MCF 10A (cell line): ENCODE measurements at regions of chr10 and their contacts with region 1.

Region 1: DNA sequence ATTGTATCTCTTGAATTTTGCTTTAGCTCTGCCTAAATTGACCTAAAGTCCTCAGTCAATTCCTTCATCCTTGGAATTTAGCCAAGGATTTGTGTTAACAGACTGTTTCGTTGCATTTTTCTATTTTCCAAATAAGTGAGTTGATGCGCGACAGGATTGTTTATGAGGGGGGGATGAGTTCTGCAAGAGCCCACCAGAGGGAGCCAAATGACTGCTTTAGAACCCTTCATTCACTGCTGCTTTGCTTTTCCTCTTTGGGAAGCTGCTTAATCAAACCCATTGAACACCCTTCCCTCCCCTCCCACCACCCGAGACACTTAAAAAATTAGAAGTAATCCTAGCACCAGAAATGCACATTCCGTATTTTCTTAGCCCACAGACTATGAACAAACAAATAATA is 33.7 kb upstream of the PTF1A start:
- DNase-seq: peak; percentile 71
- H3K4me3 Mint-ChIP-seq: no peak overlapping the region
- H3K27ac Mint-ChIP-seq: no peak overlapping the region
- H3K4me1 Mint-ChIP-seq: peaks cover 17% of the 10 kb centered on the region
- H3K27me3 Mint-ChIP-seq: peaks cover 55% of the 10 kb centered on the region
- CTCF ChIP-seq: peak; percentile 73

Region 2: DNA sequence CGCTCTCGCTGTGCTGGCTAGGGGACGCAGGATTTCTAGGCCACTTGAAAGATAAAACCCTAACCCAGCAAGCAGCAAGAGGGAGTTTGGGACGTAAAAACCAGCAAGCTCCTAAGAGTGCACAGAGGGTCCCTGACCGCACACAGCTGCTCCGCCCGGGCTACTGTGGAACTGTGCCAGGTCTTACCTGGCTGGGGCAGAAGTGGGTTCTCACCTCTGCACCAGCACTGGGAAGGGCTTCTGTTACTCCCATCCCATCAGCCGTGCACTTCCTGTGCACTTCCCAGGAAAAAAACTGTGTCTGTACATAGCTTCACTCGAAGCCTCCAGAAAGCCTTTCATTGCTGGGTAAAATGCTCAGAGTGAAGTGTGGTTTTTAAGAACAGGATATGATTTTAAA is 12.1 kb before region 1 on chr10:
- CTCF ChIA-PET with region 1: interaction called, 15 read pairs
- POLR2A ChIA-PET with region 1: no interaction called
- intact Hi-C with region 1: no loop called
- DNase-seq: no peak
- H3K4me3 Mint-ChIP-seq: no peak overlapping the region
- H3K27ac Mint-ChIP-seq: no peak overlapping the region
- H3K4me1 Mint-ChIP-seq: no peaks in the 10 kb centered on the region
- H3K27me3 Mint-ChIP-seq: no peaks in the 10 kb centered on the region
- CTCF ChIP-seq: no peak

Region 3: GRCh38 chr10:23258516-23258915 is 100.1 kb after region 1 on chr10:
- CTCF ChIA-PET with region 1: no interaction called
- POLR2A ChIA-PET with region 1: no interaction called
- intact Hi-C with region 1: no loop called
- DNase-seq: no peak
- H3K4me3 Mint-ChIP-seq: no peak overlapping the region
- H3K27ac Mint-ChIP-seq: no peak overlapping the region
- H3K4me1 Mint-ChIP-seq: no peaks in the 10 kb centered on the region
- H3K27me3 Mint-ChIP-seq: peaks cover 65% of the 10 kb centered on the region
- CTCF ChIP-seq: no peak

Region 4: DNA sequence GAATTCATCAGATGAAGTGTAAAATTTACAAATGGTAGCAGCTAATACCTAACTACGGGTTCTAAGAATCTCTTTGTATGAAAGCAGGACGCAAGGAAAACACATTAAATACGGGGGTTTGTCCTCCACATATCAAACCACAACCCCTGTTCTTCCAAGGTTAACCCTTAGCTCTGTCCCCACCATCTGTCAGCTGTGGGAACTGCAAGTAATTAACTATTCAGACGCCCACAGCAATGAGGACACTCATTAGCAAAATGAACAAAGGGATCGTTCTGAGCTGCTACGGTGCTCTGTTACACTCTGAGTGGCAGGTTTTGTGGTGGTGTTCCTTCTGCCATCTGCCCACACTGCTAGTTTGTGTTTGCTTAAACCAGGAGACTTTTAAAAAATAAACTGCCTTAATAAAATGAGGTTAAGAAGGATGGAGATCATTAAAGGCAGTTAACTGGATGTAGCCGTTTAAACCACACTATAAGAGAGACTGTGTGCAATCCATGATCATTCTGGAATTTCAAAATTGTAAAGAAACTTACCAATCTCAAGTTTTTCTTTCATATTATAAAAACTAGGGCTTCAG is 134.9 kb after region 1 on chr10:
- CTCF ChIA-PET with region 1: interaction called, 141 read pairs
- POLR2A ChIA-PET with region 1: no interaction called
- intact Hi-C with region 1: loop called (anchors 2 kb)
- DNase-seq: peak; percentile 69
- H3K4me3 Mint-ChIP-seq: no peak overlapping the region
- H3K27ac Mint-ChIP-seq: no peak overlapping the region
- H3K4me1 Mint-ChIP-seq: no peaks in the 10 kb centered on the region
- H3K27me3 Mint-ChIP-seq: peaks cover 30% of the 10 kb centered on the region
- CTCF ChIP-seq: peak; percentile 65

Region 5: GRCh38 chr10:23656735-23657134 is 498.4 kb after region 1 on chr10:
- CTCF ChIA-PET with region 1: interaction called, 29 read pairs
- POLR2A ChIA-PET with region 1: no interaction called
- intact Hi-C with region 1: loop called (anchors 5 kb)
- DNase-seq: peak; percentile 26
- H3K4me3 Mint-ChIP-seq: no peak overlapping the region
- H3K27ac Mint-ChIP-seq: no peak overlapping the region
- H3K4me1 Mint-ChIP-seq: no peaks in the 10 kb centered on the region
- H3K27me3 Mint-ChIP-seq: peaks cover 64% of the 10 kb centered on the region
- CTCF ChIP-seq: peak; percentile 60

Region 6: DNA sequence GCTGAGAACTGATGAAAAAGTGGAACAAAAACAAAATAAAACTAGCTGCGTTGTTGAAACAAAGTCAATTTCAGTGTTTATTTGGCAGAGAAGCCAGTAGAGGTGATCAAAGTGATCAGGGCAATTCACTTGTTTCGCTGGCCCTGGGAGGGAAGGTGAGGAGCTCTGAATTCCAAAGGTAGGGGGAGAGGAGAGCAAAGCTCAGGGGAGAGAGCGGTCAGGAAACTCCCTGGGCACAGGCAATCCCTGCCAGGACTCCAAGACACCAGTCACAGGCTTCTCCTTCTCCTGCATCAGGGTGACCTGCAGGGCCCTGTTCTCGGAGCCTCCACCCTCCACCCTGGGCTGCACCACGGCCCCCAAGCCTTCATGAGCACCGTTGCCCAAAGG is 1043.8 kb after region 1 on chr10:
- CTCF ChIA-PET with region 1: no interaction called
- POLR2A ChIA-PET with region 1: no interaction called
- intact Hi-C with region 1: loop called (anchors 2 kb)
- DNase-seq: no peak
- H3K4me3 Mint-ChIP-seq: no peak overlapping the region
- H3K27ac Mint-ChIP-seq: no peak overlapping the region
- H3K4me1 Mint-ChIP-seq: no peaks in the 10 kb centered on the region
- H3K27me3 Mint-ChIP-seq: no peaks in the 10 kb centered on the region
- CTCF ChIP-seq: no peak

Region 7: GRCh38 chr10:24556750-24557742 is 1398.7 kb after region 1 on chr10:
- CTCF ChIA-PET with region 1: interaction called, 5 read pairs
- POLR2A ChIA-PET with region 1: no interaction called
- intact Hi-C with region 1: loop called (anchors 10 kb)
- DNase-seq: peak; percentile 76
- H3K4me3 Mint-ChIP-seq: no peak overlapping the region
- H3K27ac Mint-ChIP-seq: peak overlapping the region; percentile 24
- H3K4me1 Mint-ChIP-seq: peaks cover 6% of the 10 kb centered on the region
- H3K27me3 Mint-ChIP-seq: no peaks in the 10 kb centered on the region
- CTCF ChIP-seq: peak; percentile 65